ENCODE measurements at regions of chr11 and their contacts with region 1.

Region 1: DNA sequence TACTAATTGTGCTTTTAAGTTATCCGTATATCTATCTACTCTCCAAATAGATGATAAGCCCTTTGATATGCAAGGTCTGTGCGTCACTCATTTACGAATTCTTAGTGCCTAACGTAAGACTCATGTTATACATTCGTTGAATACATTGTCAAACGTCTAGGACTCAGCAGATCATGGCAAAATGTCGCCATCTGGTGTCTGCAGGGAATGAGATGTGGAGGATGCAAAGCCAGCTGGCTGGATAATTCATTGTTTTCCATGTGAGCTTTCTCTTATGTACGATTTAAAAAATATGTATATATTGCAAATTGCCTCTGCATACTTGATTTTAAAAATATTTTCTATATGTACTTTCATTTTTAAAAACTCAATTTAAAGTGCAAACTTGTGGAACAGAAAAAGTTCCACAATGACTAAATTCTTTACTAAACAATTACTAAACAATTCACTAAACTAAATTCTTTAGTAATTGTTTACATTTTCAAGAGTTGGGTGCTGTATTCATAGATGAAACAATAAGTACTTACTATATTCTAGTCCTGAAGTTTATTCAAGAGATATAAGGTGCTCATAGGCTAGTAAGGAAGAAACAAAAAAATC is 33.8 kb downstream of the ZNF202 start:
- DNase-seq: peak in 4 of 5 donors; percentile 40 to 51 (median 42)
- ATAC-seq: peak in 1 of 4 donors; percentile 59
- H3K4me3 ChIP-seq: no peak overlapping the region
- H3K27ac ChIP-seq: no peak overlapping the region
- H3K4me1 ChIP-seq: no peaks in the 10 kb centered on the region
- H3K27me3 ChIP-seq: peaks cover 0 to 4% (median 0%) of the 10 kb centered on the region in 9 donors
- CTCF ChIP-seq: peak; percentile 38 to 83 (median 73)
- POLR2A ChIP-seq: no peak

Region 2: DNA sequence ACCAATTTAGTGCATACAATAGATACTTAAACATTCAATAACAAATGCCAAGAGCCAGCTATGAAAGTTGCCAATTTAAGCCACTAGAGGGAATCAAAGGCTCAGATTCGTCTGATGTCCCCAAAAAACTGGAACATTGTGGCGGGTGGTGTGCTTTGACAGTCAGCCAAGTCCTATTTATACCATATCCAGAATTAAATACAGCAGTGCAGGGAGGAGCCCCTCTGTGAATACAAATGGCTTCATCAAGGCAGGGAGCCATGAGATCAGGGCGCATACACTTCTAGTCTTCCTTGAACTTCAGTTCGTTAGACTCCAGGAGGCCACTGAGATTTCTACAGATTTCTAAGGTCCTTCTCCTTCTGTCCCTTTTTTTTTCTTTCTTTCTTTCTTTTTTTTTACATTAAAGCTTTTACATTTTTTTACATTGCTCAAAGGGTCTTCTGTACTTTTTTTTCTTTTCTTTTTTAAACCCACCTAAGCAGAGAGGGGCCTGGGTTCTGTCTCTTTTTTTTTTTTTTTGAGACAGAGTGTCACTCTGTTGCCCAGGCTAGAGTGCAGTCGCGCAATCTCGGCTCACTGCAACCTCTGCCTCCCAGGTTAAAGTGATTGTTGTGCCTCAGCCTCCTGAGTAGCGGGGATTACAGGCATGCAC is 604.3 kb before region 1 on chr11:
- intact Hi-C with region 1: loop called in 1 of 10 experiments (anchors 5 kb)
- DNase-seq: peak in 4 of 5 donors; percentile 54 to 75 (median 72)
- ATAC-seq: peak; percentile 83 to 94 (median 88)
- H3K4me3 ChIP-seq: peak overlapping the region in 1 of 12 donors; percentile 5
- H3K27ac ChIP-seq: peak overlapping the region; percentile 18 to 72 (median 58)
- H3K4me1 ChIP-seq: peaks cover 0 to 43% (median 21%) of the 10 kb centered on the region in 12 donors
- H3K27me3 ChIP-seq: no peaks in the 10 kb centered on the region
- CTCF ChIP-seq: peak; percentile 51 to 77 (median 66)
- POLR2A ChIP-seq: no peak

Region 3: GRCh38 chr11:123511037-123511870 is 196.5 kb before region 1 on chr11:
- intact Hi-C with region 1: loop called in 6 of 10 experiments (anchors 5 to 10 kb)
- DNase-seq: peak; percentile 77 to 90 (median 83)
- ATAC-seq: peak; percentile 77 to 93 (median 91)
- H3K4me3 ChIP-seq: no peak overlapping the region
- H3K27ac ChIP-seq: no peak overlapping the region
- H3K4me1 ChIP-seq: peaks cover 0 to 9% (median 0%) of the 10 kb centered on the region in 12 donors
- H3K27me3 ChIP-seq: no peaks in the 10 kb centered on the region
- CTCF ChIP-seq: peak; percentile 79 to 96 (median 88)
- POLR2A ChIP-seq: no peak

Region 4: GRCh38 chr11:123580557-123581275 is 127.0 kb before region 1 on chr11:
- intact Hi-C with region 1: loop called in 9 of 10 experiments (anchors 1 to 5 kb)
- DNase-seq: peak in 4 of 5 donors; percentile 43 to 73 (median 57)
- ATAC-seq: peak; percentile 45 to 58 (median 52)
- H3K4me3 ChIP-seq: no peak overlapping the region
- H3K27ac ChIP-seq: no peak overlapping the region
- H3K4me1 ChIP-seq: peaks cover 0 to 14% (median 2%) of the 10 kb centered on the region in 12 donors
- H3K27me3 ChIP-seq: no peaks in the 10 kb centered on the region
- CTCF ChIP-seq: peak; percentile 79 to 92 (median 88)
- POLR2A ChIP-seq: no peak

Region 5: GRCh38 chr11:123587044-123587443 is 120.7 kb before region 1 on chr11:
- intact Hi-C with region 1: loop called in 6 of 10 experiments (anchors 2 to 5 kb)
- DNase-seq: no peak
- ATAC-seq: no peak
- H3K4me3 ChIP-seq: no peak overlapping the region
- H3K27ac ChIP-seq: no peak overlapping the region
- H3K4me1 ChIP-seq: peaks cover 0 to 18% (median 0%) of the 10 kb centered on the region in 12 donors
- H3K27me3 ChIP-seq: no peaks in the 10 kb centered on the region
- CTCF ChIP-seq: no peak
- POLR2A ChIP-seq: no peak

Region 6: GRCh38 chr11:123640677-123641494 is 66.8 kb before region 1 on chr11:
- intact Hi-C with region 1: loop called (anchors 1 to 5 kb)
- DNase-seq: peak; percentile 20 to 68 (median 40)
- ATAC-seq: peak; percentile 70 to 87 (median 83)
- H3K4me3 ChIP-seq: no peak overlapping the region
- H3K27ac ChIP-seq: no peak overlapping the region
- H3K4me1 ChIP-seq: peaks cover 0 to 3% (median 0%) of the 10 kb centered on the region in 12 donors
- H3K27me3 ChIP-seq: no peaks in the 10 kb centered on the region
- CTCF ChIP-seq: peak; percentile 58 to 84 (median 73)
- POLR2A ChIP-seq: no peak